ENCODE measurements at regions of chr2 and their contacts with region 1.

Region 1: DNA sequence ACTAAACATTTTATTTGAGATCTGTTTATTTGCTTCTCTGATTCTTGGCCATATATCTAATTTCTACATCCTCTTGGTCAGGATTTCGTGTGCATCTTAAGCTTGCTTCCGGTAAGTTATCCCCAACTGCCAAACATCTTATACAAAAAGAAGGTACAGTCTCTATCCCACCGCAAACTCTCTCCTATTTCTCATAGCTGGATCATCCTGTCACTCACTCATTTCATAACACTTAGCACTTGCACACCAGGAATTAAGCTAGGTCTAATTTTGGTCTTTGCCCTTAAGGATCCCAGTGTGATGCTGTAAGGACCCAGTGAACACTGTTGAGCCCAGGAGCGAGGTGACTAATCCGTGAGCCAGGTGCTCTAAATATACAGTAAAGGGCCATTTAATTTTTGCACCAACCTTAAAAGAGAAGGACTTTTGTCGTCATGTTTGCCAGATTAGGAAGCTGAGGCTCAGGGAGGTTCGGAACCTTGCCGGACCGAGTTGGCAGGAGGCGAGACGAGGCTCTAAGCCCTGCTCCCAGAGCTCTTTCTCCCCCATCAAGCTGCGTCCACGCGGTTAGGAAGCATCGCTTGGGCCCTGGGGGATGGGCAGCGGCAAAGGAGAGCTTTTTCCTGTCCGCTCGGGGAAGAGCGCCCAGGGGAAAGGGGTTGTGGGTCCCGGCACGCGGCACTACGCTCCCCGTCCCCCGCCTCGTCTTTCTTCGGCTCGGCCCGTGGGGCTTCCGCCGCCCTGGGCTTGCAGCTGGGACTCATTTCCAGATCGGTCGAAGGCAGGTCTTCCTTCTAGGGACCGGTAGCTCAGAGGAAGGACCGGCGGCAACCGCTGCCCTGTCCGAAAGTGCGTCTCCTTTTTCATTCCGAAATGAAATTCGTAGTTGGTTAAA is 4.1 kb upstream of the ITPRIPL1 start:
- DNase-seq: peak in 4 of 35 experiments; percentile 14 to 35 (median 18)
- ATAC-seq: peak; percentile 19 to 47 (median 37)
- H3K4me3 ChIP-seq: peak overlapping the region; percentile 68 to 94
- H3K4me3 Mint-ChIP-seq: peak overlapping the region; percentile 87 to 94 (median 92)
- H3K27ac ChIP-seq: peak overlapping the region; percentile 57
- H3K27ac Mint-ChIP-seq: peak overlapping the region; percentile 73 to 85
- H3K4me1 ChIP-seq: peaks cover under 1 to 66% of the 10 kb centered on the region in 2 experiments
- H3K4me1 Mint-ChIP-seq: peaks cover 44 to 65% (median 48%) of the 10 kb centered on the region in 3 donors
- H3K27me3 ChIP-seq: peaks cover 0 to 3% of the 10 kb centered on the region in 2 experiments
- H3K27me3 Mint-ChIP-seq: peaks cover 0 to 4% of the 10 kb centered on the region in 2 donors

Region 2: DNA sequence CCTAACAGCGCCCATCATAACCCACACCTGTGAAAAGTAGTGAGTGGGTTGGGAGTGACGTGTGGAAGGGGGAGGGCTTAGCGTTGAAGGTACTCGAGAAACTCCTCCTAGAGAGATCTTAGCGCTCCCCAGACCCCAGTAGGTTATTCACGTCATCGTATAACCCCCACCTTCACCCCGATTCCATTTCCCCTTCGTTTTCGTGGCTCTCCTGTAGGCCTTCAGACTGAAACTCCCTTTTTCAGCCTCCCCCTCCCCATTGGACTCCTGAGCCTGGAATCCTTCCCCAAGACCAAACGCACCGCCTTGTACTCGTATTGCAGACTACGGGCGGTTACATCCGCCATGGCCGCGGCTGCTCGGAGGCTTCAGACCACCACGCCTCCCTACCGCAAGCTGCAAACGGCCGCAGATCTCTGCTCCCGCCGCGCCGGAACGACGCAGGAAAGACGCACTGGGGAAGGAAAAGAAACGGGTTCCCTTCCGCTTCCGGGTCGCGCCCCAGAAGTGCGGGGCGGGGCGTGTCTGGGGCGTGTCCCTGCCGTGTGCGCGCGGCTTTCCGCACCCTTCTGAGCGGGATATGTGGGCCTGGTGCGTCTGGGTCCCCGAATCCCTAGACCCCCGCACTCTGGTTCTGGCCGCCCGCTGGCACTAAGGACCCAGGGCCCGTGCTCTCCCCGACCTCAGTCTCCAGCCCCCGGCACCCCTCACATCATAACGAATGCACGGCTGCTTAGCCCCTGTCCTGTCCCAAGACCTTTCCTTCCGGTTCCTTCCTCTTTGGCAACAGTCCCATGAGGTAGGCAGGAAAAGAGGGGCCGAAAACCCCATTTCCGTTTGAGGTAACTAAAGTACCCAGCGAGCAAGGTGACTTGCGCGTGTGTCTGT is 15.6 kb before region 1 on chr2 and contains the start of gene SNRNP200:
- CTCF ChIA-PET with region 1: interaction called, 3 to 4 read pairs
- POLR2A ChIA-PET with region 1: interaction called, 7 to 10 read pairs
- DNase-seq: peak; percentile 83 to 96 (median 89)
- ATAC-seq: peak; percentile 89 to 96 (median 96)
- H3K4me3 ChIP-seq: peak within 1 kb of the TSS; percentile 93 to 99
- H3K4me3 Mint-ChIP-seq: peak within 1 kb of the TSS; percentile 97 to 99 (median 98)
- H3K27ac ChIP-seq: peak within 1 kb of the TSS; percentile 96
- H3K27ac Mint-ChIP-seq: peak within 1 kb of the TSS; percentile 98
- H3K4me1 ChIP-seq: peaks cover 11 to 38% of the 10 kb centered on the region in 2 experiments
- H3K4me1 Mint-ChIP-seq: peaks cover 58 to 63% (median 62%) of the 10 kb centered on the region in 3 donors
- H3K27me3 ChIP-seq: no peaks in the 10 kb centered on the region
- H3K27me3 Mint-ChIP-seq: no peaks in the 10 kb centered on the region
- total RNA-seq, gene SNRNP200: 200 to 254 (median 203) TPM

Region 3: GRCh38 chr2:96344011-96344410 is 23.0 kb after region 1 on chr2:
- CTCF ChIA-PET with region 1: interaction called in 1 of 2 experiments, 10 read pairs
- POLR2A ChIA-PET with region 1: interaction called, 3 to 10 read pairs
- DNase-seq: peak in 30 of 35 experiments; percentile 20 to 75 (median 48)
- ATAC-seq: peak; percentile 84 to 92 (median 88)
- H3K4me3 ChIP-seq: no peak overlapping the region
- H3K4me3 Mint-ChIP-seq: peak overlapping the region in 1 of 3 donors; percentile 24
- H3K27ac ChIP-seq: peak overlapping the region; percentile 85
- H3K27ac Mint-ChIP-seq: peak overlapping the region; percentile 85 to 93
- H3K4me1 ChIP-seq: peaks cover 0 to 34% of the 10 kb centered on the region in 2 experiments
- H3K4me1 Mint-ChIP-seq: peaks cover 7 to 57% (median 50%) of the 10 kb centered on the region in 3 donors
- H3K27me3 ChIP-seq: no peaks in the 10 kb centered on the region
- H3K27me3 Mint-ChIP-seq: no peaks in the 10 kb centered on the region

Region 4: DNA sequence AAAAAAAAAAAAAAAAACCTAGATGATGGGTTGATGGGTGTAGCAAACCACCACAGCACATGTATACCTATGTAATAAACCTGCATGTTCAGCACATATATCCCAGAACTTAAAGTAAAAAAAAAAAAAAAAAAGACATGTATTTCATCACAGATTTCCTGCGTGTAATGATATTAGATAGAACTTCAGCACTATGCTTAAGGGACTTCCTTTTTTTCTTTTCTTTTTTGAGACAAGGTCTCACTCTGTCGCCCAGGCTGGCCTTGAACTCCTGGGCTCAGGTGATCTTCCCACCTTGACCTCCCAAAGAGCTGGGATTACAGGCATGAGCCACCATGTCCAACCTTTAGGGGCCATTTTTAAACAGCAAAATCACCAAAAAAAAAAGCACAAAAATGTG is 142.1 kb after region 1 on chr2:
- CTCF ChIA-PET with region 1: no interaction called
- POLR2A ChIA-PET with region 1: no interaction called
- DNase-seq: no peak
- ATAC-seq: no peak
- H3K4me3 ChIP-seq: no peak overlapping the region
- H3K4me3 Mint-ChIP-seq: no peak overlapping the region
- H3K27ac ChIP-seq: no peak overlapping the region
- H3K27ac Mint-ChIP-seq: no peak overlapping the region
- H3K4me1 ChIP-seq: no peaks in the 10 kb centered on the region
- H3K4me1 Mint-ChIP-seq: no peaks in the 10 kb centered on the region
- H3K27me3 ChIP-seq: no peaks in the 10 kb centered on the region
- H3K27me3 Mint-ChIP-seq: no peaks in the 10 kb centered on the region

Region 5: GRCh38 chr2:96773922-96774321 is 452.9 kb after region 1 on chr2:
- CTCF ChIA-PET with region 1: interaction called in 1 of 2 experiments, 19 read pairs
- POLR2A ChIA-PET with region 1: no interaction called
- DNase-seq: peak in 34 of 35 experiments; percentile 23 to 72 (median 39)
- ATAC-seq: peak; percentile 74 to 88 (median 82)
- H3K4me3 ChIP-seq: peak overlapping the region; percentile 60 to 72
- H3K4me3 Mint-ChIP-seq: peak overlapping the region; percentile 81 to 86 (median 84)
- H3K27ac ChIP-seq: peak overlapping the region; percentile 82
- H3K27ac Mint-ChIP-seq: peak overlapping the region; percentile 94 to 96
- H3K4me1 ChIP-seq: peaks cover 0 to 22% of the 10 kb centered on the region in 2 experiments
- H3K4me1 Mint-ChIP-seq: peaks cover 19 to 33% (median 29%) of the 10 kb centered on the region in 3 donors
- H3K27me3 ChIP-seq: no peaks in the 10 kb centered on the region
- H3K27me3 Mint-ChIP-seq: no peaks in the 10 kb centered on the region